ENCODE measurements at regions of chr1 and their contacts with region 1.

Region 1: GRCh38 chr1:110053557-110054428 is 16.7 kb downstream of the ALX3 start:
- DNase-seq: no peak
- H3K4me3 ChIP-seq: no peak overlapping the region
- CTCF ChIP-seq: peak; percentile 93

Region 2: GRCh38 chr1:109886827-109887226 is 167.0 kb before region 1 on chr1:
- CTCF ChIA-PET with region 1: no interaction called
- POLR2A ChIA-PET with region 1: no interaction called
- DNase-seq: no peak
- H3K4me3 ChIP-seq: no peak overlapping the region
- CTCF ChIP-seq: no peak

Region 3: GRCh38 chr1:110019770-110020169 is 34.0 kb before region 1 on chr1:
- CTCF ChIA-PET with region 1: interaction called, 15 read pairs
- POLR2A ChIA-PET with region 1: no interaction called
- DNase-seq: no peak
- H3K4me3 ChIP-seq: no peak overlapping the region
- CTCF ChIP-seq: no peak

Region 4: DNA sequence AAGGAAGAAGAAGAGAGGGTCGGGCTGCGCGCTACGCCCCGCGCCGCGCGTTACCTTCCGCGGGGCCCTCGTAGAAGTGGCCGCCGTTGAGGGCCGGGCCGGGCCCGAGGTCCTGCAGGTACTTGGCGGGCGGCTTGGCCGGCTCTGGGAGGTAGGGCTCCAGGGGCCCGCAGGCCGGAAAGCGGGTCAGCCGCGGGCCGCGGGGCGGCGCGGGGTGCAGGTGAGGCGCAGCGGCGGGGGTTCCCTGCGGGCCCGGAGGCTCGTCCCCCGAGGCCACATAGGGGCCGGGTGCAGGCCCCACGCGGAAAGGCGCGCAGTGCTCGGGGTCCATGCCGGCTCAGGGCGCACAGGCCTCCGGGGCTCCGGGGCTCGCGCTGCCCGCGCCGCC is 16.5 kb after region 1 on chr1:
- CTCF ChIA-PET with region 1: interaction called, 39 read pairs
- POLR2A ChIA-PET with region 1: interaction called, 4 read pairs
- DNase-seq: no peak
- H3K4me3 ChIP-seq: no peak overlapping the region
- CTCF ChIP-seq: no peak

Region 5: GRCh38 chr1:110106013-110106941 is 52.5 kb after region 1 on chr1:
- CTCF ChIA-PET with region 1: interaction called, 935 read pairs
- POLR2A ChIA-PET with region 1: interaction called, 4 read pairs
- DNase-seq: no peak
- H3K4me3 ChIP-seq: no peak overlapping the region
- CTCF ChIP-seq: peak; percentile 92